AG04450 (cell line): ENCODE measurements at regions of chr1 and their contacts with region 1.

Region 1: DNA sequence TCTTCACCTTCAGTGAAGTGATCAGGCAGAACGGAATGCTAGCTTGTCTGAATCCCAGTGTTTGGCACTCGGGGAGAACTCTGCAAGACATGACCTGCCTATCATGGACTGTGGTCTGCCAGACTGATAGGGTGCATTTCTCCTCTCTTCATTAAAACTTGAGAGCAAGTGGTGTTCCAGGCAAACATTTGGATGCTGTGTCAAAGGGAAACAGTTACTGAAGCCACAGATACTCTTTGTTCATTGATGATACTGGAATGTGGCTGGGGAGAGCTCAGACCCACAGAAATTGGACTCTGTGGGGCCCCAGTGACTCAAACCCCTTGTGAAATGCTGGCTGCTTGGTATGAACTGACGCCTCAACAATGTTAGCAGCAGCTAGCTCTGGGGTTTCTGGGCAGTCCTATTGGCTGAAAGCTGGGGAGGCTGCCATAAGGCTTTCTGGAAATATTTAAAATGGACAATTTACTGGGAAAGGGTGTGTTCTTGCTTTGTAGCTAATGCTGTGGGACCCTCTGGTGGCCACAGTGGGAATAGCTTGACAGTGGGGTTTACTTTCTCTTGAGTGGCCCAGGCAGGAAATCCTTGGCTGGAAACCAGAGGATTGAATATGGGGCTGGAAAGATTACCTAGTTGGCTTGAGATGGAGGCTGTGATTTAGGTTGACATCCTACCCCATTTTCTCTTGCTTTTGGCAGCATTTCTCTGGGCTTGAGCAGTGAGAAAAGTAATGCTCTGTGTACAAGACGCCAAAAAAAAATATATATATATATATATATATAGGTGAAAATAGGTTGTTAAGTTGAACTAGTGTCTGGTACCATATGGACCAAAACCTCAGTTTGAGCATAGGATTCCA is 8.0 kb upstream of the S100A10 start:
- DNase-seq: peak; percentile 94
- H3K4me3 ChIP-seq: no peak overlapping the region
- H3K27ac ChIP-seq: peak overlapping the region; percentile 81
- H3K27me3 ChIP-seq: peaks cover 26% of the 10 kb centered on the region
- CTCF ChIP-seq: peak; percentile 98

Region 2: DNA sequence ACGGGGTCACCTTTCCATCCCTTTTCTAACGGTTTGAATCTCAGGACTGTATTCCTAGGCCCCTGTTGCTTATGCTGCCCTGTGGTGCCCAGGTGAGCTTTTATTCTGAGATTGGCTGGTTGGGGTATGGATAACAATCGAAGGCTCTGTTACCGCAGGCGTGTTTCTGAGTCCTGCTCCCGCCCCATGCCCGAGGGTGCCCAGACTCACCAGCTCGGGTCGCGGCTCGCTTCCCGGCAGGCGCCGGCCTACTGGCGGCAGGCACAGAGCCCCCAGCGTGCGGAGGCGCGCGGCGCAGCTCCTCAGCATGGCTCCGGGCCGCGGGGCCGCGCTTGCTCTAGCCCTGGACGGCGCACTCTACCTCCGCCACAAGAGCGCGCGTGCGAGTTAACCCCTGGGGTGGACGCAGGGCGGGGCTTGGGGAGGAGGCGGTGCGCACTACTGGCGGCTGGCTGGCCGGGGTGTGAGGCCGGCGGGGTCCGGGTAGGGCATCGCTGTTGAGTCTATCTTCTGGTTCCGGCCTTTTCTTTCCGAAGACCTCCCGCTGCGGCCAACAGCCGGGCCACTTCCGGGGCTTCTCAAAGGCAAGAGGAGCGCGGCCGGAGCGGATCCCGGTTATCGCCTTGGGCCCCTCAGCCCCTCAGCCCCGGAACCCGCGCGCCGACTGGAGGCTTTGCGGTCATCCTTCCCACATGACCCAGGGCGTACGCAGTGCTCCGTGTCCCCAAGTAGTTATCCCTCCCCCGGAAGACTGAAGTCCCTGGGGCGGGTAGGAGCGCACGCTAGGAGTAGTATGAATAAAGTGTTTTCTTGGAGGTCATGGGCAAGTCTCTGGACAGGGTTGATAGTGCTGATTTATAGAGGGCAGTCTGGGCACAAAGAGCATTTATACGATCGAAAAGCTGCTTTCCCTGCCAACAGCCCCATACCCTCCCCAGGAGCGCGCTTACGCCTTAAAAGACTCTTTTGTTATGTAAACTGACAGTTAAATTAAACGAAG is 92.2 kb before region 1 on chr1 and contains the start of gene THEM4:
- CTCF ChIA-PET with region 1: interaction called, 24 read pairs
- POLR2A ChIA-PET with region 1: interaction called, 6 read pairs
- DNase-seq: peak; percentile 88
- H3K4me3 ChIP-seq: peak within 1 kb of the TSS; percentile 84
- H3K27ac ChIP-seq: peak within 1 kb of the TSS; percentile 91
- H3K27me3 ChIP-seq: peaks cover 2% of the 10 kb centered on the region
- CTCF ChIP-seq: peak; percentile 5; the same call in 1 of the 2 replicates
- polyA plus RNA-seq, gene THEM4: 20.3 and 24.8 TPM in 2 replicates

Region 3: GRCh38 chr1:151942882-151943281 is 58.7 kb before region 1 on chr1:
- CTCF ChIA-PET with region 1: interaction called, 23 read pairs
- POLR2A ChIA-PET with region 1: no interaction called
- DNase-seq: no peak
- H3K4me3 ChIP-seq: no peak overlapping the region
- H3K27ac ChIP-seq: no peak overlapping the region
- H3K27me3 ChIP-seq: no peaks in the 10 kb centered on the region
- CTCF ChIP-seq: no peak

Region 4: DNA sequence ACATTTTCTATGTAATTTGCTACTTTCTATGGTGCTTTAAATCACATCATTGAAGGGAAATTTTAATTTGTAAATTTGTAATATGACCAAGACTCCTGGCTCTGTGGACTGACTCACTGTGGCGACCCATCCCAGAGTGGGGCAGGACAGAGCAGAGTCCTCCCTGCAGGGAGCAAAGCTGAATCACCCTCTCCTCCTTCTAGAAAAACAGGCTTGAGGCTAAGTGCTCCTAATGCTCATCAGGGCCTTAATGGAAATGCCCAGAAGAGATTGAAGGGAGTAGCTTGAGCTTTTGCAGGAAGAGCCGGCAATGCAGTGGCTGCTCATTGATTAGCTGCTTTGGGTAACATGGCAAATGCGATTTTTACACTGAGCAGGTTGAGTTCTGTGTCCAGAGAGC is 24.8 kb before region 1 on chr1:
- CTCF ChIA-PET with region 1: interaction called, 223 read pairs
- POLR2A ChIA-PET with region 1: no interaction called
- DNase-seq: no peak
- H3K4me3 ChIP-seq: no peak overlapping the region
- H3K27ac ChIP-seq: no peak overlapping the region
- H3K27me3 ChIP-seq: no peaks in the 10 kb centered on the region
- CTCF ChIP-seq: no peak

Region 5: DNA sequence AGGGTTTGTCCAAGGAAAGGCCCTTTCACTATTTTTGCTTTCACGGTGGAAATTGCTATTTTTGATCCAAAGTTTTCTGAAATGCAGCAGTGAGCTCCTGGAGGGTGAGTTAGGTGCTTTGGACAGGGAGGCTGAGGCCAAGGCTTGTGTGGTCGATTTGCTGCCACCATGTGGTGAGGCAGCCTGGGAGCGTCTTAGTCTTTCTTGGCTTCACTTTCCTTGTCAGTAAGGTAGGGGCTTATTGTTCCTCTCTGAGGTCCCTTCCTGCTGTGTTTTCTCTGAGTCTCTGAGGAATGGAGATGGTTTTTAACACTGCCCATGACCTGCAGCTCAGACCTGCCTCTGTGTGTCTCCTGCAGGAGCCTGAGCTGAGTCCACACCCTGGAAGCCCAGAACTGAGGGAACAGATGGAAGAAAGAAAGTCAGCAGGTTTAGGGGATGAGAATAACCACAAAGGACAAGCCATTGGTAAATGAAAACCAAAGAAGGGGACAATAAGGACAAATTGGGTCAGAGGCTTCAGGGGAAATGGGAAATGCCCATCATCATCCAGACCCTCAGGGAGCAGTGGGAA is 12.1 kb after region 1 on chr1:
- CTCF ChIA-PET with region 1: interaction called, 85 read pairs
- POLR2A ChIA-PET with region 1: no interaction called
- DNase-seq: no peak
- H3K4me3 ChIP-seq: no peak overlapping the region
- H3K27ac ChIP-seq: no peak overlapping the region
- H3K27me3 ChIP-seq: peaks cover 24% of the 10 kb centered on the region
- CTCF ChIP-seq: peak; percentile 76